ENCODE measurements at regions of chr15 and their contacts with region 1.

Region 1: GRCh38 chr15:90799639-90800170 is 68.7 kb upstream of the FURIN start:
- DNase-seq: no peak
- H3K4me3 ChIP-seq: no peak overlapping the region
- H3K27ac ChIP-seq: no peak overlapping the region
- H3K4me1 ChIP-seq: no peaks in the 10 kb centered on the region
- H3K27me3 ChIP-seq: no peaks in the 10 kb centered on the region
- CTCF ChIP-seq: no peak

Region 2: DNA sequence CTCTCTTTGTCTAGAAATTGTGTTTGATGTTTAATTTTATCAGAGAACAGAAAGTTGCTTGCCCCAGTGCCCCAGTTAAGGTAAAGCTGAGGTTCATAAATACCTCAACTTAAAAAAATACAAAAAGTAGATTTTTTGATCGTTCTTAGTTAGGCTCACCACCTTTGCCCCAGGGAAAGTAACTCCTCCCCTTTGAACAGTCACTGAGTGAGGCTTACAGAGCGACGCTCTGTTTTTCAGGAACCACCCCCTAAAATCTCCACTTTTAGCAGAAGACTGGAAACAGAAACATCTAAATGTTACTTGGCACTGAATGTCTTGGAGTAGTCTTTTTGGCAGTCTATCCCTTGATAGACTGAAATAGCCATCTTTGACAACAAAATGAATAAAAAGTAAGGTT is 57.6 kb before region 1 on chr15:
- CTCF ChIA-PET with region 1: no interaction called
- dilution Hi-C with region 1: loop called (anchors 5 kb)
- in situ Hi-C with region 1: no loop called
- intact Hi-C with region 1: no loop called
- DNase-seq: no peak
- H3K4me3 ChIP-seq: no peak overlapping the region
- H3K27ac ChIP-seq: no peak overlapping the region
- H3K4me1 ChIP-seq: no peaks in the 10 kb centered on the region
- H3K27me3 ChIP-seq: no peaks in the 10 kb centered on the region
- CTCF ChIP-seq: no peak

Region 3: GRCh38 chr15:90839187-90840071 is 39.7 kb after region 1 on chr15:
- CTCF ChIA-PET with region 1: no interaction called
- dilution Hi-C with region 1: loop called (anchors 5 kb)
- in situ Hi-C with region 1: no loop called
- intact Hi-C with region 1: no loop called
- DNase-seq: peak; percentile 68
- H3K4me3 ChIP-seq: no peak overlapping the region
- H3K27ac ChIP-seq: no peak overlapping the region
- H3K4me1 ChIP-seq: no peaks in the 10 kb centered on the region
- H3K27me3 ChIP-seq: no peaks in the 10 kb centered on the region
- CTCF ChIP-seq: no peak